Activated CD4-positive, alpha-beta T cell treated with anti-CD3 and anti-CD28 coated beads for 36 hours (primary cell): ENCODE measurements at regions of chr11 and their contacts with region 1.

Region 1: GRCh38 chr11:14413307-14414069 is 54.5 kb upstream of the RRAS2 start:
- DNase-seq: peak; percentile 36
- ATAC-seq: no peak
- H3K4me3 Mint-ChIP-seq: no peak overlapping the region
- H3K27ac Mint-ChIP-seq: peak overlapping the region; percentile 44
- H3K4me1 Mint-ChIP-seq: peaks cover 40% of the 10 kb centered on the region
- H3K27me3 Mint-ChIP-seq: no peaks in the 10 kb centered on the region

Region 2: DNA sequence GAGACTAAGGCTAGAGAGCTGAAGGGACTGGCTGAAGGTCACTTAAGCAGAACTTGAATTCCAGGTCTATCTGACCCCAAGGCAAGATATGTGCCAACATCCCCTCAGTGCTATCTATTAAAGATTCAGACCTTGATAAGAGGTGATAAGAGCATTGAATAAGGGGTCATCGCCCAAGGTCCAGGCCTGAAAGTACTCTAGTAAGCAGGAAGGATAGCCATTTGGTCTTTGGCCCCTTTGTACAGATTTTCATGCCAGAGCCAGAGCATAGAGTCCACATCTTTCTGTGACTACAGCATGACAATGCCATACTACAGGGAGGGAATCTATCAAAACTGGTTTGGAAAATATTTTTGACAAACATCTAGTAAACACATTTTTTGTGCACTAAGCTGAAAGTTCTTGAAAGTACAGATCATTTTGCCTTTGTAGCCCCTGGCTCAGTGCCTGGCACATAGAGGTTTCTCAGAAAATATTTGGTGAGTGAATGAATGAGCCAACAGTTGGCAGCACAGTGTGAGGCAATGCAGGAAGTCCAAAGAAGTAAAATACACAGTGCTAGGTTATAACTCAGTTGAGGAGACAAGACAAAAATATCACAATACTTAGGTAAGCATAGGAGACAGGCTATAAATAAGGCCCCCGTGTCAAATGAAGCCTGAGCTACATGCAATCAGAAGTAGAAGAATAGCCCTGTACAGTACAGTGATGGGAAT is 39.4 kb before region 1 on chr11:
- CTCF ChIA-PET with region 1: interaction called, 3 read pairs
- POLR2A ChIA-PET with region 1: no interaction called
- intact Hi-C with region 1: loop called (anchors 2 to 5 kb)
- DNase-seq: no peak
- ATAC-seq: no peak
- H3K4me3 Mint-ChIP-seq: no peak overlapping the region
- H3K27ac Mint-ChIP-seq: no peak overlapping the region
- H3K4me1 Mint-ChIP-seq: peaks cover 41% of the 10 kb centered on the region
- H3K27me3 Mint-ChIP-seq: peaks cover 9% of the 10 kb centered on the region